Mammary epithelial cell (primary cell): ENCODE measurements at regions of chr10 and their contacts with region 1.

Region 1: GRCh38 chr10:61943674-61944410 is 42.3 kb downstream of the ARID5B start:
- DNase-seq: peak; percentile 59
- H3K4me3 ChIP-seq: peak overlapping the region in 2 of 3 experiments; percentile 34 to 58
- H3K27ac ChIP-seq: peak overlapping the region; percentile 96
- H3K4me1 ChIP-seq: peaks cover 23% of the 10 kb centered on the region
- H3K27me3 ChIP-seq: no peaks in the 10 kb centered on the region
- CTCF ChIP-seq: peak; percentile 16 to 29

Region 2: DNA sequence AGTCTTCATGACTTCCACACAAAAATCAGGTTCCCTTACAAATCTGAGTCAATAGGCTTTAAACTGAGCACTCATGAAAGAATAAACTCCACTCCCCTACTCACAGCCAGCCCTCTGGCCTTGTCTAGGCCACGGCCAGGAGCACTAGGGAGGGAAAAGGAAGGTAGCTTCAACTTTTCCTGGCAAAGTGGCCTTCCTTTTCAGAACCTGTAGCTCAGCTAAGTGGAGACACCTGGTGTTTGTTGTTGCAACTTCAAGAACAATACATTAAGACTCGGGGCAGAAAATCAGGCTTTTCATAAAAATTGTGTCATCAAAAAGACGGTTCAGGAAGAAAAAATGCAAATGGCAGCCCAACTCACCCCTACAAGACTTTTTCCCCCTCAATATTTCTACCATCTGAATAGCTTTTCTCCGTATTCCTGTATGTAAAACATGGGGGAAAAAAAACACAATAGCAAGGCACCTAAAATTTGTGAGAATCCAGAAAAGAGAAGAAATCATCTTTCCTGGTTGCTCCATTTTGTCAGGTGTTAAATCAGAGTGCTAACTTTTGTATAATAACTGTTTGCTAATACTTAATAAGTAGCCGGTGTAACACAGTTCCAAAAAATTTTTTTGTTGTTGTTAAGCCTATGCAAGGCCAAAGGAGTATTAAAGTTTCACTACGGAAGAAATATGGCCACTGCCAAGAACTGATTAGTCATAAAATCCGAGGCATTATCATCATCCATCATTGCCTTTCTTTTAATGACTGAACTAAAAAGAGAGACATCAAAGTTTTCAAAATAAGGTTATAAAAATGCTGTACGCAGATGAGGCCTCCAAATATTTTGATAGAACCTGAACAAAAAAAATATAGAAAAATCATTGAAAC is 108.5 kb before region 1 on chr10:
- CTCF ChIA-PET with region 1: no interaction called
- dilution Hi-C with region 1: no loop called
- in situ Hi-C with region 1: no loop called
- intact Hi-C with region 1: loop called (anchors 5 kb)
- DNase-seq: peak; percentile 54
- H3K4me3 ChIP-seq: no peak overlapping the region
- H3K27ac ChIP-seq: peak overlapping the region; percentile 63
- H3K4me1 ChIP-seq: peaks cover 21% of the 10 kb centered on the region
- H3K27me3 ChIP-seq: no peaks in the 10 kb centered on the region
- CTCF ChIP-seq: peak; percentile 38 to 67

Region 3: DNA sequence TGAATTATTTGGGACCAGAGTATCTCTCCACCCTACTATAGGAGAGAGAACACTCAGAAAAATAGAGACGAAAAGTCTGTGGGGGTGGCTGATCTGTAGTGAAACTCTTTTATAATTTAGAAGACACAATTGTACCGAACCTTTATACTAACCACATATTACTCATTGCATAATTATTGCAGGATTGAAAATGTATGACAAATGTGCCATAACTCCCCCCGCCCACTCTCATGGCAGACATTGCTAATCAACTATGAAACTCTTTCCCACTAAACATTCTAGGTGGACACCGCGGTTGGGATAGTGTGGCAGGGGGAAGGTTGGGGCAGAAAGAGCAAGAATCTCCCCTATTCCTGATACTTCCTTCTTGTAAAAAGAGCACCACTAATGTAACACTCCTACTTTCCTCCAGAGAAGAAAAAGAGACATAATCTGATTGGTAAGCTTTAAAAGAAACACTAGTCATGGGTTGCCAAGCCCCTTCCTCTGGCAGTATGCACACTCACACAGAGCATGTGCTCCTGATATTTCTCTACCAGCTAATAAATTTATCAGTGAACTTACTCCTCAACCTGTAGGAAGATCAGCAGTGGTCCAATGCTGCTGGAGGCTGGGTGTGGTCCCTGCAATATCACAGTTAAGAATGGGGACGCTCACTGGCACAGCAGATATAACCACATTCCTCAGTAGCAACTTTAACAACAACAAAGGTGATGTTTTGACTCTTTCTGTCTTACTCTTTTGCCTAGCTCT is 61.0 kb before region 1 on chr10:
- CTCF ChIA-PET with region 1: no interaction called
- dilution Hi-C with region 1: no loop called
- in situ Hi-C with region 1: no loop called
- intact Hi-C with region 1: no loop called
- DNase-seq: peak; percentile 81
- H3K4me3 ChIP-seq: no peak overlapping the region
- H3K27ac ChIP-seq: peak overlapping the region; percentile 74
- H3K4me1 ChIP-seq: peaks cover 10% of the 10 kb centered on the region
- H3K27me3 ChIP-seq: no peaks in the 10 kb centered on the region
- CTCF ChIP-seq: no peak

Region 4: DNA sequence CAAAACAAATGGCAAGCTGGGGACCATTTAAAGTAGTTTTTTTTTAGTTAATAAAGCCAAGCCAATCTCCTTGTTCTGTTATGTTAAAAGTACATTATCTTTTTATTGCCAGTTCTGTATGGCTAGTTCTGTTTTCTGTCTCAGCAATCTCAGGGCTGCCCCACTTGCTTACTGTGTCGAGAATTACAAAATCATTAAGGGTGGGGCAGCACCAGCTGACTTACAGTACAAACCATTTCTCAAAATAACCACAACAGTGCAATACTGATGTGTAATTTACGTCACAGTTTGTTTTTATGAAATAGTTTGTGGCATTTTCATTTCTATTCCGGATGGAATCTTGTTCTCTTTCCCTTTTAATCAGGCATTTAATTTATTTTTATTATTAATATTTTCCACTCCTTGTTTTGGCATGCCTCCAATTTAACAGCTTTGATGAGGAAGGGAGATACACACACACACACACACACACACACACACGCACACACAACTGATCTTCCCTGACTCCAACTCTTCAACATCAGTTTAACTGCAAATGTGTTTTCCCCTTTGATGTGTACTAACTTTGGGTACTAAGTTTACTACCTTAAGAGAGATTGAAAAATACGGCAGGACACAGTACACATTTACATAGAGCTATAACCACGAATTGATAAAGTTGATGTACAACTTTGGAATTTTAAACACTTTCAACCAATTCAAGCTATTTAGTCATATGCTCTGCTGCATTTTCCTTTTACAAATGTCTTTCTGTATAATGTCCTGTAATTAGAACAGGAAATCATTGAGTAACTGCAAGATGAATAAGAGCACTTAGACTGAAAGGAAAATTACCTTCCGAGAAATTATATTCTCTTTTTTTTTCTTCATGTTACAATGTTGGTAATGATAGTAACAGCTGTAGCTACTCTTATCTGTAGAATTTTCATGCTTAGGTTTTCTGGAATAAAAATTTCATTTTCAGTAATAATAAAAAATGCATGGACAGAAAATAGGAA is 49.1 kb after region 1 on chr10:
- CTCF ChIA-PET with region 1: no interaction called
- dilution Hi-C with region 1: no loop called
- in situ Hi-C with region 1: no loop called
- intact Hi-C with region 1: loop called (anchors 2 kb)
- DNase-seq: peak; percentile 90
- H3K4me3 ChIP-seq: peak overlapping the region; percentile 3 to 32 (median 24)
- H3K27ac ChIP-seq: peak overlapping the region; percentile 88
- H3K4me1 ChIP-seq: peaks cover 15% of the 10 kb centered on the region
- H3K27me3 ChIP-seq: no peaks in the 10 kb centered on the region
- CTCF ChIP-seq: no peak